ENCODE measurements at regions of chr17 and their contacts with region 1.

Region 1: GRCh38 chr17:36089888-36090836 is at the start of gene CCL3:
- DNase-seq: no peak
- H3K4me3 Mint-ChIP-seq: peak within 1 kb of the TSS; percentile 68
- H3K27ac Mint-ChIP-seq: peak within 1 kb of the TSS; percentile 91
- H3K4me1 Mint-ChIP-seq: peaks cover 61% of the 10 kb centered on the region
- H3K27me3 Mint-ChIP-seq: peaks cover 10% of the 10 kb centered on the region
- total RNA-seq, gene CCL3: 1,244 and 1,261 TPM in 2 replicates

Region 2: GRCh38 chr17:35879773-35880654 is 210.1 kb before region 1 on chr17 and contains the start of gene CCL5:
- intact Hi-C with region 1: loop called (anchors 5 kb)
- DNase-seq: peak; percentile 66
- H3K4me3 Mint-ChIP-seq: peak within 1 kb of the TSS; percentile 86
- H3K27ac Mint-ChIP-seq: peak within 1 kb of the TSS; percentile 99
- H3K4me1 Mint-ChIP-seq: peaks cover 57% of the 10 kb centered on the region
- H3K27me3 Mint-ChIP-seq: no peaks in the 10 kb centered on the region
- total RNA-seq, gene CCL5: 25.4 and 30.2 TPM in 2 replicates

Region 3: GRCh38 chr17:35898283-35899070 is 191.7 kb before region 1 on chr17:
- intact Hi-C with region 1: loop called (anchors 5 kb)
- DNase-seq: no peak
- H3K4me3 Mint-ChIP-seq: no peak overlapping the region
- H3K27ac Mint-ChIP-seq: peak overlapping the region; percentile 36
- H3K4me1 Mint-ChIP-seq: peaks cover 55% of the 10 kb centered on the region
- H3K27me3 Mint-ChIP-seq: peaks cover 2% of the 10 kb centered on the region

Region 4: GRCh38 chr17:36027761-36028160 is 62.4 kb before region 1 on chr17:
- intact Hi-C with region 1: loop called (anchors 10 kb)
- DNase-seq: no peak
- H3K4me3 Mint-ChIP-seq: no peak overlapping the region
- H3K27ac Mint-ChIP-seq: no peak overlapping the region
- H3K4me1 Mint-ChIP-seq: no peaks in the 10 kb centered on the region
- H3K27me3 Mint-ChIP-seq: peaks cover 20% of the 10 kb centered on the region

Region 5: DNA sequence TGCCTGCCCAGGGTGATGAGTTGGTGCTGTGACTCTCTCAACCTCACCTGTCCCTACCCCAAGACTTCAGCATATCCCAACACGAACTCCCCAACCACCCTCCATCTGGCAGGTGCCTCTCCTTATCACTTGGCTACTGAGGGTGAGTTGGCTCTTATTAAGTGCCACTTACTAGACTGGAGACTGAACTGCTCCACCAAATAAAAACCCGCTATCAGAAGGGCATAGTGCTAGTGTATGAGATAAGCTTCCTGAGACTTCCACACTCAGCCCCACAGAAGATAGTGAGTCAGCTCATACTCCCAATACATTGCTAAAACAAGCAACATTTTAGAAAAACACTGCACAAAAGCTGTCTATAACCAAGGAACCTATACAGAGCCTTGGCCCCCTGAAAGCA is 42.1 kb before region 1 on chr17:
- intact Hi-C with region 1: no loop called
- DNase-seq: no peak
- H3K4me3 Mint-ChIP-seq: no peak overlapping the region
- H3K27ac Mint-ChIP-seq: no peak overlapping the region
- H3K4me1 Mint-ChIP-seq: no peaks in the 10 kb centered on the region
- H3K27me3 Mint-ChIP-seq: peaks cover 30% of the 10 kb centered on the region

Region 6: DNA sequence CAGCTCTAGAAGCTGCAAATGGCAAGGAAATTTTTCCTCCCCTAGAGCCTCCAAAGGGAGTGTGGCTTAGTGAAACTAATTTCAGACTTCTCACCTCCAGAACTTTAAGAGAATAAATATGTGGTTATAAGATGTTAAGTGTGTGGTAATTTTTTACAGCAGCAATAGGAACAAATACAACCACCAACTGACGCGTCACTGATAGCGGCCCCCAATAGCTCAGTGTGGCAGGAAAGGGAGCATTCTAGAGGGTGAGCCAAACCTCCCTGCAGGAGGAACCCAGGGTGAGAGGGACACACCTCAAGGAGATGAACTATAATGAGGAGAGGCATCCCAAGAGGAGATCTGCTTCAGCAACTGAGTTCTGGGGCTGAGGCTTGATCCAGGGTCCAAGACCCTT is 17.5 kb after region 1 on chr17:
- intact Hi-C with region 1: loop called (anchors 1 kb)
- DNase-seq: no peak
- H3K4me3 Mint-ChIP-seq: no peak overlapping the region
- H3K27ac Mint-ChIP-seq: peak overlapping the region; percentile 36
- H3K4me1 Mint-ChIP-seq: peaks cover 24% of the 10 kb centered on the region
- H3K27me3 Mint-ChIP-seq: peaks cover 10% of the 10 kb centered on the region

Region 7: GRCh38 chr17:36117505-36118382 is 27.6 kb after region 1 on chr17:
- intact Hi-C with region 1: loop called (anchors 1 kb)
- DNase-seq: no peak
- H3K4me3 Mint-ChIP-seq: no peak overlapping the region
- H3K27ac Mint-ChIP-seq: peak overlapping the region; percentile 56
- H3K4me1 Mint-ChIP-seq: peaks cover 16% of the 10 kb centered on the region
- H3K27me3 Mint-ChIP-seq: peaks cover 5% of the 10 kb centered on the region